ENCODE measurements at regions of chr6 and their contacts with region 1.

Region 1: GRCh38 chr6:31216208-31216898 is 45.9 kb upstream of the POU5F1 start:
- DNase-seq: no peak
- ATAC-seq: no peak
- H3K4me3 ChIP-seq: no peak overlapping the region
- H3K27ac ChIP-seq: no peak overlapping the region
- H3K4me1 ChIP-seq: no peaks in the 10 kb centered on the region
- H3K27me3 ChIP-seq: peaks cover 6% of the 10 kb centered on the region
- CTCF ChIP-seq: no peak
- POLR2A ChIP-seq: no peak
- RAD21 ChIP-seq: no peak

Region 2: GRCh38 chr6:31246050-31246521 is 29.7 kb after region 1 on chr6:
- CTCF ChIA-PET with region 1: no interaction called
- POLR2A ChIA-PET with region 1: no interaction called
- dilution Hi-C with region 1: no loop called
- in situ Hi-C with region 1: no loop called
- intact Hi-C with region 1: no loop called
- DNase-seq: peak; percentile 84
- ATAC-seq: peak; percentile 98
- H3K4me3 ChIP-seq: no peak overlapping the region
- H3K27ac ChIP-seq: no peak overlapping the region
- H3K4me1 ChIP-seq: 0 out of 2 replicates have a peak, but pooled peaks cover 2% of the 10 kb centered on the region
- H3K27me3 ChIP-seq: peaks cover 7% of the 10 kb centered on the region
- CTCF ChIP-seq: no peak
- POLR2A ChIP-seq: no peak
- RAD21 ChIP-seq: no peak

Region 3: GRCh38 chr6:31474871-31475286 is 258.5 kb after region 1 on chr6:
- CTCF ChIA-PET with region 1: no interaction called
- POLR2A ChIA-PET with region 1: no interaction called
- dilution Hi-C with region 1: no loop called
- in situ Hi-C with region 1: no loop called
- intact Hi-C with region 1: loop called (anchors 10 kb)
- DNase-seq: no peak
- ATAC-seq: no peak
- H3K4me3 ChIP-seq: no peak overlapping the region
- H3K27ac ChIP-seq: no peak overlapping the region
- H3K4me1 ChIP-seq: no peaks in the 10 kb centered on the region
- H3K27me3 ChIP-seq: peaks cover 36% of the 10 kb centered on the region
- CTCF ChIP-seq: 0 out of 2 replicates have a peak, but pooled peaks have one; percentile 14
- POLR2A ChIP-seq: no peak
- RAD21 ChIP-seq: no peak

Measured in IMR-90 (cell line).